CD14-positive monocyte (primary cell): ENCODE measurements at regions of chr14 and their contacts with region 1.

Region 1: GRCh38 chr14:75205591-75205990 is 29.2 kb upstream of the TMED10 start:
- DNase-seq: peak; percentile 77 to 93 (median 87)
- H3K4me3 ChIP-seq: no peak overlapping the region
- H3K4me3 Mint-ChIP-seq: no peak overlapping the region
- H3K27ac ChIP-seq: peak overlapping the region; percentile 43 to 75
- H3K27ac Mint-ChIP-seq: peak overlapping the region; percentile 85 to 93 (median 89)
- H3K4me1 ChIP-seq: peaks cover 19 to 24% of the 10 kb centered on the region in 2 donors
- H3K4me1 Mint-ChIP-seq: peaks cover 25% of the 10 kb centered on the region
- H3K27me3 ChIP-seq: no peaks in the 10 kb centered on the region
- H3K27me3 Mint-ChIP-seq: no peaks in the 10 kb centered on the region
- CTCF ChIP-seq: no peak

Region 2: DNA sequence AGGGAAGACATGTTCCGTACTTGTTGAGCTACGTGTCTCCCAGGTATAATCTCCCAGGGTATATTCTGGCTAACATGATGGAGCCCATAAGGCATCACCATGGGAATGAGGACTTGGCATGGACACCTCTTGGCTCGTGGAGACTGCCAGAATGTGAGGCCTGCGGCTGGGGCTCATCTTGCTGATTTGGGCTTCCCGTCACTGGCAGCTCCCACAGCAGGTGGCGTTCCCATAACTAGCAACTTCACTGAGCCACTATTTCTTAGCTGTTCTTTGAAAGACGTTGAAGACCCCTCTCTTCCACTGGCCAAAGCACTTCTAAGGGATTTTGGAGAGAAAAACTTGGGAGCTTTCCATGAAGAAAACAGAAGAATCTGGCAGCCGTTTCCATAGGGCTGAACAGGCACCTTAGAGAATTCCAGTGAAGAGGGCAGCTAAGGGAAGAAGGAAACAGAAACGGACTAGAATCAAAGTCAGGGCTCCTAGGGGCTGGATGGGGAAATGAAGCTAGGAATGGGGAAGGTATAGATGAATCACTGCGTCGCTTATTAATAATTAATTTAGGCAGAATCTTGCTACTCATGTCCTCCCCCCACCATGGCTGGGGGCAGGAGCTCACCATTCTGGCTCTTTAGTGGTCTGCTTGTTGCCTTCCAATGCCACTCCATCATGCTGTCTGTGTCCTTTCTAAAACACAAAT is 33.3 kb after region 1 on chr14:
- intact Hi-C with region 1: no loop called
- DNase-seq: peak in 2 of 3 donors; percentile 47 to 48
- H3K4me3 ChIP-seq: no peak overlapping the region
- H3K4me3 Mint-ChIP-seq: peak overlapping the region in 1 of 2 donors; percentile 10
- H3K27ac ChIP-seq: no peak overlapping the region
- H3K27ac Mint-ChIP-seq: peak overlapping the region in 1 of 7 donors; percentile 37
- H3K4me1 ChIP-seq: peaks cover 44 to 48% of the 10 kb centered on the region in 2 donors
- H3K4me1 Mint-ChIP-seq: peaks cover 42% of the 10 kb centered on the region
- H3K27me3 ChIP-seq: no peaks in the 10 kb centered on the region
- H3K27me3 Mint-ChIP-seq: peaks cover 2 to 5% (median 2%) of the 10 kb centered on the region in 3 donors
- CTCF ChIP-seq: no peak

Region 3: GRCh38 chr14:75249251-75249957 is 43.8 kb after region 1 on chr14:
- intact Hi-C with region 1: loop called in 1 of 2 experiments (anchors 5 kb)
- DNase-seq: no peak
- H3K4me3 ChIP-seq: no peak overlapping the region
- H3K4me3 Mint-ChIP-seq: no peak overlapping the region
- H3K27ac ChIP-seq: no peak overlapping the region
- H3K27ac Mint-ChIP-seq: peak overlapping the region in 1 of 7 donors; percentile 22
- H3K4me1 ChIP-seq: peaks cover 8 to 16% of the 10 kb centered on the region in 2 donors
- H3K4me1 Mint-ChIP-seq: peaks cover 29% of the 10 kb centered on the region
- H3K27me3 ChIP-seq: no peaks in the 10 kb centered on the region
- H3K27me3 Mint-ChIP-seq: peaks cover 0 to 2% (median 1%) of the 10 kb centered on the region in 3 donors
- CTCF ChIP-seq: no peak